IMR-90 (cell line): ENCODE measurements at regions of chr3 and their contacts with region 1.

Region 1: DNA sequence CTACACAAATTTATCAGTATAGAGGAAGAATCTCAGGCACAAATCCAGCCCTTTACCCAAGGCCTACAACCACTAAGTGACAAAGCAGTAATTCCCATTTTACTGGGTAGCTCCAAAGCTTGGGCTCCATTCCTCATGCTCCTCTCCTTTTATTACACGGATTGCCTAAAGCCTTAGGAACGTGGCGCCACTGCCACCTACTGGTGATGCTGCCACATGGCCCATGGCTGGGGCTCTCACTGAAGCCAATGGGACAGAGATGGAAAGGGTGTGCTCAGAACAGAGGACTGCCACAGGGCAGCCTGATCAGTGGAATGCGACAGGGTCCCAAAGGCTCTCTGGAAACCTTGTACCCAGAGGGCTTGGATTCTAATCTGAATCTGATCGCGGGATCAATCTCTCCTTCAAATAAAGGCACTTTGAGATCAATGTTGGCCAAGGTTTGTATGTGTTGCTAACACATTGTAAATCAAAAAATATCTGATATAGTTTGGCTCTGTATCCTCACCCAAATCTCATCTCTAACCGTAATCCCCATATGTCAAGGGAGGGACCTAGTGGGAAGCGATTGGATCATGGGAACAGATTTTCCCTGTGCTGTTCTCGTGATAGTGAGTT is 33.5 kb upstream of the LYZL4 start:
- DNase-seq: peak; percentile 59
- ATAC-seq: peak; percentile 100
- H3K4me3 ChIP-seq: no peak overlapping the region
- H3K27ac ChIP-seq: no peak overlapping the region
- H3K4me1 ChIP-seq: no peaks in the 10 kb centered on the region
- H3K27me3 ChIP-seq: peaks cover 11% of the 10 kb centered on the region
- CTCF ChIP-seq: peak; percentile 95
- POLR2A ChIP-seq: no peak
- RAD21 ChIP-seq: peak; percentile 92

Region 2: DNA sequence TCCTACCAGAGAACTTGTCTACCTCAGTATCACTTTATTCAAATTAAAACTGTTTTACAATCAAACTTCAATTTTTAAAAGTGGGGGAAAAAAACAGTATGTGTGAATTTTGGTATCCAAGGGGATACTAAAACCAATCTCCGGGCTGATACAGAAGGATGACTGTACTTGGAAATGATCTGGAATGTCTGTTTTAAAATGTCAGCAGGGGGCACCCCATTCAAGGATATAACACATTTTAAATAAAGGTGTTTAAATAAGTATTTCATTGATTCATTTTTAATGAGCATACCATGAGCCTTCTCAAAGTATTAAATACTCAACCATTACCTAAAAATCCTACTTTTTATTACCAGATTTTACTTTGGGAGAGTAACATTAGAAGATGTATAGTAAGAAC is 550.0 kb before region 1 on chr3:
- CTCF ChIA-PET with region 1: interaction called, 3 read pairs
- POLR2A ChIA-PET with region 1: no interaction called
- dilution Hi-C with region 1: no loop called
- in situ Hi-C with region 1: loop called (anchors 10 kb)
- intact Hi-C with region 1: loop called (anchors 2 kb)
- DNase-seq: peak; percentile 62
- ATAC-seq: peak; percentile 68
- H3K4me3 ChIP-seq: no peak overlapping the region
- H3K27ac ChIP-seq: no peak overlapping the region
- H3K4me1 ChIP-seq: no peaks in the 10 kb centered on the region
- H3K27me3 ChIP-seq: no peaks in the 10 kb centered on the region
- CTCF ChIP-seq: peak; percentile 65
- POLR2A ChIP-seq: no peak
- RAD21 ChIP-seq: peak; percentile 77

Region 3: GRCh38 chr3:42118762-42119361 is 325.1 kb before region 1 on chr3:
- CTCF ChIA-PET with region 1: interaction called, 5 read pairs
- POLR2A ChIA-PET with region 1: no interaction called
- dilution Hi-C with region 1: no loop called
- in situ Hi-C with region 1: loop called (anchors 25 kb)
- intact Hi-C with region 1: loop called (anchors 5 kb)
- DNase-seq: peak; percentile 49
- ATAC-seq: peak; percentile 54; the same call in 1 of the 2 replicates
- H3K4me3 ChIP-seq: no peak overlapping the region
- H3K27ac ChIP-seq: no peak overlapping the region
- H3K4me1 ChIP-seq: peaks cover 11% of the 10 kb centered on the region
- H3K27me3 ChIP-seq: no peaks in the 10 kb centered on the region
- CTCF ChIP-seq: peak; percentile 37
- POLR2A ChIP-seq: no peak
- RAD21 ChIP-seq: peak; percentile 54

Region 4: GRCh38 chr3:42459151-42459550 is 15.2 kb after region 1 on chr3:
- CTCF ChIA-PET with region 1: no interaction called
- POLR2A ChIA-PET with region 1: no interaction called
- dilution Hi-C with region 1: no loop called
- in situ Hi-C with region 1: no loop called
- intact Hi-C with region 1: no loop called
- DNase-seq: no peak
- ATAC-seq: no peak
- H3K4me3 ChIP-seq: no peak overlapping the region
- H3K27ac ChIP-seq: no peak overlapping the region
- H3K4me1 ChIP-seq: no peaks in the 10 kb centered on the region
- H3K27me3 ChIP-seq: no peaks in the 10 kb centered on the region
- CTCF ChIP-seq: no peak
- POLR2A ChIP-seq: no peak
- RAD21 ChIP-seq: no peak

Region 5: GRCh38 chr3:42562047-42562907 is 118.3 kb after region 1 on chr3:
- CTCF ChIA-PET with region 1: no interaction called
- POLR2A ChIA-PET with region 1: no interaction called
- dilution Hi-C with region 1: no loop called
- in situ Hi-C with region 1: no loop called
- intact Hi-C with region 1: no loop called
- DNase-seq: peak; percentile 34
- ATAC-seq: no peak; the same call in 1 of the 2 replicates
- H3K4me3 ChIP-seq: no peak overlapping the region
- H3K27ac ChIP-seq: no peak overlapping the region
- H3K4me1 ChIP-seq: no peaks in the 10 kb centered on the region
- H3K27me3 ChIP-seq: no peaks in the 10 kb centered on the region
- CTCF ChIP-seq: no peak
- POLR2A ChIP-seq: no peak
- RAD21 ChIP-seq: no peak

Region 6: DNA sequence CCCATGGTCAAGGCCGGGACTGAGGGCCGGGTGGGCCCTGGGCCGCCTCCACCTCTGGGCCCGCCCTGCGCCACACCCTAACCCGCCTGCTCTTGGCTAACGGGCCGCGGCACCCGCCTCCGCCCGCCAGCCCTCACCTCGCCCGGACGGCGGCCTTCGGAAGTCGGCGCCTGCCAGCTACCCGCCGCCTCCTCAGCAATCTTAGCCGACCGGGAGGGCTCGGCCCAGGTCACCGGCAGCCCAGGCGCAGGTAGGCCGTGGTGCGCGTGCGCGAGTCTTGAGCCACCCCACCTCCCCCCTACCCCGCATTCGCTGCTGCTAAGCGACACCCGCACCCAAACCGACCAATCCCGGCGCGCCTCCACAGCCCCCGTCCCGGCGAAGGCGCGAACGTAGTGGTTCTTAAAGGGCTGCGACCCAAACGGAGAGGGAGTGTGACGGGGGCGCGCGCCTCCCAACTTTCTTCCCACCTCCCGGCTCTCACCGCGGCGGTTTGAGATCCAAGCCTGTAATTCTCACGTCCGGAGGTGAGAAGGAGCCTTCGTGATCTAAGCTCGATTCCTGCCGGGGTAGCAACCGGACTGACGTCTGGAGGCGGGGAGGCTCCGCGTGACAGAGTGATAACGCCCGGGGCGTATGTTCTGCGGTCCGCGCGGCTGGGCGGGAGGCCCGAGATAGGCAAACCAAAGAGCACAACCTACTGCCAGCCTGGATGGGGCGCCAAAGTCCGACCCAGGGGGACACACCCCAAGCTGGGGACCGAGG is 138.0 kb after region 1 on chr3 and contains the start of gene SEC22C:
- CTCF ChIA-PET with region 1: no interaction called
- POLR2A ChIA-PET with region 1: no interaction called
- dilution Hi-C with region 1: no loop called
- in situ Hi-C with region 1: no loop called
- intact Hi-C with region 1: no loop called
- DNase-seq: peak; percentile 84
- ATAC-seq: peak; percentile 98
- H3K4me3 ChIP-seq: peak within 1 kb of the TSS; percentile 95
- H3K27ac ChIP-seq: peak within 1 kb of the TSS; percentile 64
- H3K4me1 ChIP-seq: peaks cover 2% of the 10 kb centered on the region; the same call in 1 of the 2 replicates
- H3K27me3 ChIP-seq: no peaks in the 10 kb centered on the region
- CTCF ChIP-seq: peak; percentile 23; the same call in 1 of the 2 replicates
- POLR2A ChIP-seq: peak; percentile 67; the same call in 1 of the 2 replicates
- RAD21 ChIP-seq: 0 out of 2 replicates have a peak, but pooled peaks have one; percentile 11
- total RNA-seq, gene SEC22C: 43.9 and 46.9 TPM in 2 replicates

Region 7: GRCh38 chr3:42936157-42936981 is 492.4 kb after region 1 on chr3:
- CTCF ChIA-PET with region 1: no interaction called
- POLR2A ChIA-PET with region 1: no interaction called
- dilution Hi-C with region 1: no loop called
- in situ Hi-C with region 1: no loop called
- intact Hi-C with region 1: no loop called
- DNase-seq: peak; percentile 16
- ATAC-seq: peak; percentile 61
- H3K4me3 ChIP-seq: peak overlapping the region; percentile 50
- H3K27ac ChIP-seq: no peak overlapping the region
- H3K4me1 ChIP-seq: no peaks in the 10 kb centered on the region
- H3K27me3 ChIP-seq: no peaks in the 10 kb centered on the region
- CTCF ChIP-seq: no peak
- POLR2A ChIP-seq: no peak
- RAD21 ChIP-seq: no peak